ENCODE measurements at regions of chr5 and their contacts with region 1.

Region 1: DNA sequence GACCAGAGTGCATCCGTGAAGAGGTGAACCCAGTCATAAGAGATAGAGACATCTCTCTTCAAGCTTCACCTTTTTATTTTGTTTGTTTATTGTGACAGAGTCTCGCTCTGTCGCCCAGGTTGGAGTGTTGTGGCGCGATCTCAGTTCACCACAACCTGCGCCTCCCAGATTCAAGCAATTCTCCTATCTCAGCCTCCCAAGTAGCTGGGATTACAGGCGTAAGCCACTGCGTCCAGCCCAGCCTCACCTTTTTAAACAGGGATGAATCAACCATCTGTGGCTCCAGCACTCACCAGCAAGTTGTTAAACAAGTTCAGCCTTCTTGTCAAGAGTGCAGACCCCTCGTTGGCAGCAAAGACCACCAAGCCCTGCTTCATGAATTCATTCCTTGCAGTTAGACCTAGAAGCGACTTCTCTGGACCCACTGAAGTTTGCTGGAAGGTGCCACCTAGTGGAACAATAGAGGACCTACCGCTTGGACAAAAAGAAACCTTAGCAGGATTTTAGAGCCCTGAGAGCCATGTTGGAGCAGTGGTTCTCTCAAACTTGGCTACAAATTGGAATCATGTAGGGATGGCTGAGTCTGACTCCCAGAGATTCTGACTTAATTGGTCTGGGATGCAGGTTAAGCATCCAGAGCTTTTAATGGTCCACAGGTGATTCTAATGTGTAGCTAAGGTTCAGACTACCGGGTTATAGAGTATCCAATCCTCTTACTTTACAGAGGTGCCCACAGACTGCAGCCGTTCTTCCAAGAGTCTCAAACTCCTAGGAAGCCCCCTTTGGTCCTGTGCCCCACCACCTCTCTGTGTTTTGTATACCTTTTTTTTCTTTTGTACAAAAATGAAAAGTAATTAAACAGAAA is 10.5 kb upstream of the GALNT10 start:
- DNase-seq: peak; percentile 30
- H3K4me3 ChIP-seq: no peak overlapping the region
- H3K27ac ChIP-seq: no peak overlapping the region
- H3K4me1 ChIP-seq: no peaks in the 10 kb centered on the region
- H3K27me3 ChIP-seq: peaks cover 9% of the 10 kb centered on the region
- CTCF ChIP-seq: peak; percentile 74 to 80

Region 2: DNA sequence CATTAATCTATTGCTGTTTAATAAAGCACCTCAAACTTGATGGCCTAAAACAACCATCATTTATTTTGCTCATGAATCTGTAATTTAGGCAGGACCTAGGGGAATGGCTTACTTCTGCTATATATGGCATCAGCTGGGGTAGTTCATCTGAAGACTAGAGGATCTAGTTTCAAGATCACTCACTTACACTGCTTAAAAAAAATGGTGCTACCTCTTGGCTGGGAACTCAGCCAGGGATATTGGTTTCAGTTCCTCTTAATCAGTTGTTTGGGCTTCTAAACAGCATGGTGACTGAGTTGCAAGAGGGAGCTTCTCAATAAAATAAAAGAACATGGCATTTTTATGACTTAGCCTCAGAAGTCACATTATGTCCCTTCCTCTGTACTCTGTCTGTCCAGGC is 283.4 kb before region 1 on chr5:
- CTCF ChIA-PET with region 1: no interaction called
- dilution Hi-C with region 1: no loop called
- in situ Hi-C with region 1: no loop called
- intact Hi-C with region 1: no loop called
- DNase-seq: peak; percentile 51
- H3K4me3 ChIP-seq: no peak overlapping the region
- H3K27ac ChIP-seq: no peak overlapping the region
- H3K4me1 ChIP-seq: peaks cover 34% of the 10 kb centered on the region
- H3K27me3 ChIP-seq: no peaks in the 10 kb centered on the region
- CTCF ChIP-seq: no peak

Region 3: DNA sequence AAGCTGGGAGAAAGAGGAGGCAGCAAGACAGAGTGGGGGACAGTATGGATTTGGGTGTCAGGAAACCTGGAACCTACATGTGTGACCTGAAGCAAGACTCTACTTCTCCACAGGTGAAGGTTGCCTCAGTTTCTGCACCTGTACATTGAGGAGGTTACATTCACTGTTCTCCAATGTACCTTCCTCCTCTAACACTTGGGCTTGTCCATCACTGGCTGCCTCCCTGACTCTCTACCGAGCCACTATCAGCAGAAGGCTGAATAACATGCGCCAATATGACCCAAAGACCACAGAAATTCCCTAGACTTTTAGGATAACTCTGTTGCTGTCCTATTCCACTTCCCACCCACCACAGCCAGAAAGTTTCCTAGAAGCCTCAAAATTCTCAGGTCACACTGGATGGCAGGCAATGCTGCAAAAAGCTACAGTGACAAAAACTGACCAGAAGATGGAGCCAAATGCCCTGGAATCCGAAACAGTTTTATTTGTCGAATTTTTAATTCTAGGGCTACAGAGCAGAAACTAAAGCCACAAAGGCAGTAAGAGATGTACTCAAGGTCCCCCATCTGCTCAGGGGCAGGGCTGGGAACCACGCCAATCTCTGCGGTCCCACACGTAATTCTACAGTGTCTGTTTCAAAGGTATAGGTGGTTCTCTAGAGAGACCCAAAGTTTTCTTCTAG is 205.8 kb before region 1 on chr5:
- CTCF ChIA-PET with region 1: no interaction called
- dilution Hi-C with region 1: no loop called
- in situ Hi-C with region 1: no loop called
- intact Hi-C with region 1: loop called (anchors 1 kb)
- DNase-seq: peak; percentile 25
- H3K4me3 ChIP-seq: no peak overlapping the region
- H3K27ac ChIP-seq: no peak overlapping the region
- H3K4me1 ChIP-seq: no peaks in the 10 kb centered on the region
- H3K27me3 ChIP-seq: no peaks in the 10 kb centered on the region
- CTCF ChIP-seq: peak; percentile 72 to 75

Region 4: DNA sequence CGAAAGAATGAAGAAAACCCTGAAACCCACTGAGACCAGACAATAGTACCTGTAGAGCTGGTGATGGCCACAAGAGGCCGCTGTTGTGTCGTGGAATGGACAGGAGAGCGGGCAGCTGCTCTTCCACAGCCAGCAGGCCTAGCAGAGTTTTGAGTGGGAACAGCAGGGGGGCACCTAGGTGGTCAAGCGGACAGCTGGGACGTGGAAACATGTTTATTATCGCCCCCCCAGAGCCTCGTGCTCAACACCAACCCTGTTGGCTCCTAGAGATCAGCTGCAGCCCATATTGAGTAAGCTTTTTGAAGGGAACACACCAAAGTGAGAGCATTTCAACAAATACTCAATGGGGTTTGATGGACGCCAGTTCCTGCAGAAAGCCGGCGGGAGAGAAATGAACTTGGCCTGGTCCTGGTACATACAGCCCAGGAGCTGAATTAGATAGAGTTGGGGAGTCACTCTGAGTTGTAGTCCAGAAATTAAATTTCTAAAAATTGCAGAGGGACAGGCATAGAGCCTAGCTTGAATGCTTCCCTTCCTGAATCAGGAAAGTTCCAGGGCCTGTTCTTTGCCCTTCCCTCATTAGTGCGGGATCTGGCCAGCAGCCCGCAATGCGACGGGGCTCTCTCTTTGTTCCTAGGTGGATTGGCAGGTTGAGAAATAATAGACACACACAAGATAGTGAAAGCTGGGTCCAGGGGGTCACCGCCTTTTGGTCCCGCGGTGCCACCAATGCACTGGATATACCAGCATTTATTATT is 107.5 kb before region 1 on chr5:
- CTCF ChIA-PET with region 1: no interaction called
- dilution Hi-C with region 1: no loop called
- in situ Hi-C with region 1: no loop called
- intact Hi-C with region 1: loop called (anchors 1 kb)
- DNase-seq: peak; percentile 56
- H3K4me3 ChIP-seq: no peak overlapping the region
- H3K27ac ChIP-seq: no peak overlapping the region
- H3K4me1 ChIP-seq: peaks cover 3% of the 10 kb centered on the region
- H3K27me3 ChIP-seq: no peaks in the 10 kb centered on the region
- CTCF ChIP-seq: peak; percentile 82 to 90

Region 5: DNA sequence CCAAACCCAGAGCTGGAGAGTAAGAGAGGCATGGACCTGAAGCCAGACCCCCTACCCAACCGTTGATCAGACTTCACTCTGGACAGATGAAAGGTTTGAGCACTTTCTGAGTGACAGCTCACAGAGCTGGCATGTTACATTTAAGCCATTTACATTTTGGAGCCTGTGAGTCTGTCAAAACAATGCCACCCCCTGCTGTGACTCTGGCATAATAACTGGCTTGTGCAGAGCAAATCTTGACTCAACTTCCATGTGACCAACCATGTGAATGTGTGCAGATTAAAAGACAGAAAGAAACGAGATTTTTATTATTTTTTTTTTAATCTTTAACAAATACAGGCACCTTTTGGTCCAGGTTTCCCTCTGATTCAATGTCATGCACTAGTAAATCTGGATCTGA is 92.8 kb before region 1 on chr5:
- CTCF ChIA-PET with region 1: no interaction called
- dilution Hi-C with region 1: loop called (anchors 5 kb)
- in situ Hi-C with region 1: no loop called
- intact Hi-C with region 1: no loop called
- DNase-seq: no peak
- H3K4me3 ChIP-seq: no peak overlapping the region
- H3K27ac ChIP-seq: no peak overlapping the region
- H3K4me1 ChIP-seq: no peaks in the 10 kb centered on the region
- H3K27me3 ChIP-seq: no peaks in the 10 kb centered on the region
- CTCF ChIP-seq: no peak

Region 6: GRCh38 chr5:154221371-154221896 is 41.4 kb after region 1 on chr5:
- CTCF ChIA-PET with region 1: no interaction called
- dilution Hi-C with region 1: no loop called
- in situ Hi-C with region 1: no loop called
- intact Hi-C with region 1: no loop called
- DNase-seq: peak; percentile 88
- H3K4me3 ChIP-seq: no peak overlapping the region
- H3K27ac ChIP-seq: peak overlapping the region; percentile 66
- H3K4me1 ChIP-seq: peaks cover 32% of the 10 kb centered on the region
- H3K27me3 ChIP-seq: no peaks in the 10 kb centered on the region
- CTCF ChIP-seq: no peak

Region 7: DNA sequence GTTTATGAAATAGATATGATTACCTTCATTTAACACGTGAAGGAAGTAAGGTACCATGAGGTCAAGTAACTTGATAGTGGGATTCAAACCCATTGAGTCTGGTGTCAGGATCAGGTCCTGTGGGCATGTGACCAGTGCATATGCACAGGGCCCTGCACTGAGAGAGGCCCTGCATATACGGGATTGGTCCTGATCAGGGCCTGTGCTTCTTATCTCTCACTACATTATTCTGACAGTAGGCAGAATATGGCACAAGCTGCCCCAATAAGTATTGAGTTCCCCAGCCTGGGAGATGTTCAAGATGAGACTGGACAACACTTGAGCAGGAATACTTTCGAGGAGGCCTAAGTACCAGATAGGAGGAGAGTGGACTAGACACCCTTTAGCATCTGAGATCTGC is 54.5 kb after region 1 on chr5:
- CTCF ChIA-PET with region 1: no interaction called
- dilution Hi-C with region 1: loop called (anchors 5 kb)
- in situ Hi-C with region 1: no loop called
- intact Hi-C with region 1: no loop called
- DNase-seq: no peak
- H3K4me3 ChIP-seq: no peak overlapping the region
- H3K27ac ChIP-seq: no peak overlapping the region
- H3K4me1 ChIP-seq: no peaks in the 10 kb centered on the region
- H3K27me3 ChIP-seq: no peaks in the 10 kb centered on the region
- CTCF ChIP-seq: no peak

Region 8: GRCh38 chr5:154273028-154273617 is 93.0 kb after region 1 on chr5:
- CTCF ChIA-PET with region 1: no interaction called
- dilution Hi-C with region 1: no loop called
- in situ Hi-C with region 1: no loop called
- intact Hi-C with region 1: no loop called
- DNase-seq: no peak
- H3K4me3 ChIP-seq: no peak overlapping the region
- H3K27ac ChIP-seq: no peak overlapping the region
- H3K4me1 ChIP-seq: peaks cover 5% of the 10 kb centered on the region
- H3K27me3 ChIP-seq: no peaks in the 10 kb centered on the region
- CTCF ChIP-seq: no peak

Measured in mammary epithelial cell (primary cell).